Mammary epithelial cell (primary cell): ENCODE measurements at regions of chr4 and their contacts with region 1.

Region 1: GRCh38 chr4:142719854-142720541 is 126.1 kb downstream of the INPP4B start:
- DNase-seq: peak; percentile 84
- H3K4me3 ChIP-seq: peak overlapping the region in 1 of 3 experiments; percentile 15
- H3K27ac ChIP-seq: peak overlapping the region; percentile 84
- H3K4me1 ChIP-seq: peaks cover 19% of the 10 kb centered on the region
- H3K27me3 ChIP-seq: no peaks in the 10 kb centered on the region
- CTCF ChIP-seq: peak; percentile 49 to 59

Region 2: DNA sequence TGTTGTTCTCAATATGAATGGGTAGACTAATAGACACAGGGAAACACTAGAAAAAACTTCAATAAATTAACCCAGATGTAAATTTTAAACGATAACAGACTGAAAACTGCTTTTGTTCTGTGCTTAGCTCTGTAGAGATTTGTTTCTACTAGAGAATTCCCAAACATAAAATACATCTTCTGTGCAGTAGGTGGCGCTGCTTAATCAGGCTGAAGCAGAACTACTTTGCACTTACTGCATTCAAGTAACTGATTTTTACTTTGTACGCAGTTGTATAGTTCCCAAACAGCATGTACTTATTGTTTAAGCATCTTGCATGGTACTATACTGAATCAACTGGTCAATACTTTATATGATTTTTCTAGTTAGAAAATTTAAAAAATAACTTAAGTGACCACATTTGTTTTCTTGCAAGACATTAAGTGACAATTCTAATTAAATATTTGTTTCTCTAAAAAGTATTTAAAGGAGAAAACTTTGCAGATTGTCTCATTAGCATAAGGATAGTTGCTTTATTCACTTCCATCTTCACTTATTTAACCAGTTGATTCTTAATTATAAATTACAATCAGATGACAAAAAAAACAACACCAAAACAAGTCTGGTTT is 593.0 kb before region 1 on chr4:
- CTCF ChIA-PET with region 1: no interaction called
- dilution Hi-C with region 1: no loop called
- in situ Hi-C with region 1: no loop called
- intact Hi-C with region 1: loop called (anchors 1 kb)
- DNase-seq: peak; percentile 41
- H3K4me3 ChIP-seq: no peak overlapping the region
- H3K27ac ChIP-seq: no peak overlapping the region
- H3K4me1 ChIP-seq: peaks cover 6% of the 10 kb centered on the region
- H3K27me3 ChIP-seq: no peaks in the 10 kb centered on the region
- CTCF ChIP-seq: peak; percentile 80 to 82

Region 3: DNA sequence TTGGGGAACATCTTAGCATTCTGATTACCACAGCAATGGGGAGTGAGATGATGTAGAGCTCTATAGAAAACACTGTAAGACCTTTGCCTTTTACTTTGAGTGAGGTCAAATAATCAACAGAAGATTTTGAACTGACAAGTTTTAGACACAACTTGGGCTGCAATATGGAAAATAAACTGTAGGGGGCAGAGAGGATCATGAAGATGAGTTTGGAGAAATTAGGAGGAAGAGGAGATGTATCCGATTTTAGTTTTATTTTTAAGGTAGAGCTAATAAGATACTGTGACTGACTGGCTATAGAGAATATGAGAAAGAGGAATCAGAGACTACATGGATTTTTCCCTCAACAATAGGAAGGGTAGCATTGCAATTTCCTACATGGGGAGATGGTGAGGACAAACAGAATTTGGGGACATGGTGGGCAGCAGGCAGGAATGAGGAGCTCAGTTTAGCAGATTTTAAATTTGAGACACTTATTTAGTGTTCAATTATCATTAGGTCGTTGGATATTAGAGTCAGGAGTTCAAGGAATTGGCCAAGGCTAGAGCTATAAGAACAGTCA is 437.0 kb before region 1 on chr4:
- CTCF ChIA-PET with region 1: no interaction called
- dilution Hi-C with region 1: no loop called
- in situ Hi-C with region 1: no loop called
- intact Hi-C with region 1: loop called (anchors 5 kb)
- DNase-seq: no peak
- H3K4me3 ChIP-seq: no peak overlapping the region
- H3K27ac ChIP-seq: no peak overlapping the region
- H3K4me1 ChIP-seq: peaks cover 19% of the 10 kb centered on the region
- H3K27me3 ChIP-seq: no peaks in the 10 kb centered on the region
- CTCF ChIP-seq: peak; percentile 42 to 56

Region 4: GRCh38 chr4:142353149-142353738 is 366.8 kb before region 1 on chr4:
- CTCF ChIA-PET with region 1: interaction called, 5 read pairs
- dilution Hi-C with region 1: no loop called
- in situ Hi-C with region 1: loop called in 1 of 2 experiments (anchors 25 kb)
- intact Hi-C with region 1: loop called (anchors 1 kb)
- DNase-seq: peak; percentile 59
- H3K4me3 ChIP-seq: peak overlapping the region in 1 of 3 experiments; percentile 24
- H3K27ac ChIP-seq: peak overlapping the region; percentile 32
- H3K4me1 ChIP-seq: peaks cover 33% of the 10 kb centered on the region
- H3K27me3 ChIP-seq: no peaks in the 10 kb centered on the region
- CTCF ChIP-seq: peak; percentile 83 to 91

Region 5: GRCh38 chr4:142474335-142475087 is 245.5 kb before region 1 on chr4:
- CTCF ChIA-PET with region 1: interaction called, 3 read pairs
- dilution Hi-C with region 1: no loop called
- in situ Hi-C with region 1: no loop called
- intact Hi-C with region 1: loop called (anchors 10 kb)
- DNase-seq: peak; percentile 95
- H3K4me3 ChIP-seq: no peak overlapping the region
- H3K27ac ChIP-seq: peak overlapping the region; percentile 20
- H3K4me1 ChIP-seq: peaks cover 29% of the 10 kb centered on the region
- H3K27me3 ChIP-seq: no peaks in the 10 kb centered on the region
- CTCF ChIP-seq: no peak

Region 6: DNA sequence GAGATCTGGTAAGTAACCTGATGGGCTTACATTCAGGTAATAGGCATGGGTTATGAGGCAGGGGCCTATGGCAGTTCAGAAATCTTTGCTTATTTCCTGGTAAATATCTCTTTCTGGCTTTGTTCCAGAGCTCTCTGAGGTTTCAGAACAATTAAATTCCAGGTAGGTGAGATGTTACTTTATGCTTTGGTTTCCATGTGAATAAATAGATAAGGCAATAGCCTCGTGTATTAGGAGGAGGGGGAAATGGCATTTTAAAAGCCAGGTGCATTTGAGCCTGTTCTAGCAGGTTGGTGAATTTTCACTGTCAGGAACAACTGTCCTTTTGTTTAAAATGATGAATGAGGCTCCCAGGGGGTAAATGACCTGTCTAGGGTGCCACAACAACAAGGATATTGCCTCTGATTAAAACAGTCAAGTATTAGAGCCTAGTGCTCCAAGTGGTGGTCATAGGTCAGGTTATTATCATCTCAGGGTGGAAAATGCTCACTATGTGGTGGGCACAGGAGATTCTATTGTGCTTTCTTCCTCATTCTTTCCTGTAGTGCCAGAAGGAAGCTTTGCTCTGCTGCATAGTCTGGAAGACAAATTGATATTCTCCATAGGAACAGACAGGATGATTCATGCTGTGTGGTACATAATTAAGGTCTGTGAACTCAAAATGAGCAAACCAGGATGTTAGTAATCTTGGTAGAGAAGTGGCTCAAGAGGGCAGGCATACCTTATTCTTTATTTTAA is 170.1 kb before region 1 on chr4:
- CTCF ChIA-PET with region 1: interaction called, 6 read pairs
- dilution Hi-C with region 1: no loop called
- in situ Hi-C with region 1: loop called in 1 of 2 experiments (anchors 25 kb)
- intact Hi-C with region 1: loop called (anchors 1 kb)
- DNase-seq: peak; percentile 97
- H3K4me3 ChIP-seq: no peak overlapping the region
- H3K27ac ChIP-seq: peak overlapping the region; percentile 100
- H3K4me1 ChIP-seq: peaks cover 43% of the 10 kb centered on the region
- H3K27me3 ChIP-seq: no peaks in the 10 kb centered on the region
- CTCF ChIP-seq: peak in 1 of 2 donors; percentile 11